ENCODE measurements at regions of chr1 and their contacts with region 1.

Region 1: GRCh38 chr1:218345673-218346390 is 696 bp downstream of the TGFB2 start:
- DNase-seq: peak; percentile 81
- H3K4me3 ChIP-seq: peak overlapping the region; percentile 57
- H3K27ac ChIP-seq: no peak overlapping the region
- H3K4me1 ChIP-seq: peaks cover 35% of the 10 kb centered on the region
- H3K27me3 ChIP-seq: peaks cover 6% of the 10 kb centered on the region
- CTCF ChIP-seq: no peak

Region 2: DNA sequence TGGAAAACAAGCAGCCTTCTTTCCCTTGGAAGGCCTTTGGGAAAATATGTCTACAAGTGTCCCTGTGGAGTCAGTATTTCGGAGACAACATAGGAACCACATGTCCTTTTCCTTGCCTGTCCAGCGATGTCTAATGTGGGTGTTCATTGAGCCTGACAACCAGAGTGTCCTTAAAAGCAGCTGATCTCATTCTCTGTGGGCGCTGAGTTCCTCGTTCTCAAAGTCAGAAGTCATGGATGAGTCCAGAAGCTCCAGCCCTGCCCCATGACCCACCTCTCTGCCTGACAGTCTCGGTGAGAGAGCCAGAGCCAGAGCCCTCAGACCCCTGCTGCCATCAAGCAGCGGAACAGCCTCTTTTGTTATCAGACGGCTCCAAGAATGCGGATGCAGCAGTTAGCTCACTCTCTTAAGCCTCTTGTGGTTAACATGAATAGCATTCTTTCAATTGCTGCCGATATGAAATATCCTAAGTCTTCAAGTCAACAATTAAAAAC is 328.5 kb after region 1 on chr1:
- CTCF ChIA-PET with region 1: no interaction called
- POLR2A ChIA-PET with region 1: no interaction called
- intact Hi-C with region 1: loop called (anchors 10 kb)
- DNase-seq: peak; percentile 72
- H3K4me3 ChIP-seq: no peak overlapping the region
- H3K27ac ChIP-seq: no peak overlapping the region
- H3K4me1 ChIP-seq: no peaks in the 10 kb centered on the region
- H3K27me3 ChIP-seq: peaks cover 31% of the 10 kb centered on the region
- CTCF ChIP-seq: no peak

Region 3: DNA sequence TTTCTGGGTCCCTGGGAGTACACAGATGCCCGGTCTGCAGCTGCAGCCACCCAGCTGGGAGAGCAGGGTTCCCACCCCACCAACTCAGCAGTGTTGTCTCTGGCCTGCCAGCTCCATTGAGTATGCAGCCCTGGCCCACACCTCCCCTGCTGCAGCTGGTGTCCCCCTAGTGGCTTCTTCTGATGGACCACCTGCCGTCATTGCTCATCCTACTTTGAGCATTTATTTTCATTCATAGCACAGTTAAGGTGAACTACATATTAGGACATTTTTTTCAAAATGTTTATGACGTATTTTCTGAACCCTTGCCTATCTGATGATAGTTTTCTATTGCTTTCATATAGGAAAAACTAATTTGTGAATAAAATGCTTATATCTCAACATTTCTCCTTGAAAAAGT is 638.1 kb after region 1 on chr1:
- CTCF ChIA-PET with region 1: no interaction called
- POLR2A ChIA-PET with region 1: no interaction called
- intact Hi-C with region 1: loop called (anchors 10 kb)
- DNase-seq: peak; percentile 51
- H3K4me3 ChIP-seq: no peak overlapping the region
- H3K27ac ChIP-seq: no peak overlapping the region
- H3K4me1 ChIP-seq: no peaks in the 10 kb centered on the region
- H3K27me3 ChIP-seq: peaks cover 11% of the 10 kb centered on the region
- CTCF ChIP-seq: peak; percentile 59

Region 4: DNA sequence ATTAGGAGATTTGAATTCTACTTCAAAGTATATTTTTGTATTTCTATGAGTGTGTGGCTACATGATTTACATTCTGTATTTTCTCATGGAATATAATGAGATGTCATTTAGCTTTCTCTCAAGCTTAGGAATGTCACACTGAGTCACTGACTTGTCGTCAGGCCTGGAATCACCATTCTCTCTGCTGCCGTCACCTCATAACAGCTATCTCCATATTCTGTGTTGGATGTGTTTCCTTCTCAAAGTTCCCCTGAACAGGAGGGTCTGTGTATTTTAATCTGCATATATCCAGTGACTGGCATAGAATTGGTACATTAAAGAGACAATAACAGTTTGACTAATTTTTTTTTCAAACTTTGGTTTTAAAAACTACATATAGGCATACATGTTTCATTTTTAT is 863.7 kb after region 1 on chr1:
- CTCF ChIA-PET with region 1: no interaction called
- POLR2A ChIA-PET with region 1: no interaction called
- intact Hi-C with region 1: loop called (anchors 10 kb)
- DNase-seq: no peak
- H3K4me3 ChIP-seq: no peak overlapping the region
- H3K27ac ChIP-seq: no peak overlapping the region
- H3K4me1 ChIP-seq: no peaks in the 10 kb centered on the region
- H3K27me3 ChIP-seq: no peaks in the 10 kb centered on the region
- CTCF ChIP-seq: no peak